Mammary epithelial cell (primary cell): ENCODE measurements at regions of chr2 and their contacts with region 1.

Region 1: GRCh38 chr2:200168641-200169555 is 137.6 kb upstream of the SPATS2L start:
- DNase-seq: no peak
- H3K4me3 ChIP-seq: no peak overlapping the region
- H3K27ac ChIP-seq: no peak overlapping the region
- H3K4me1 ChIP-seq: peaks cover 7% of the 10 kb centered on the region
- H3K27me3 ChIP-seq: no peaks in the 10 kb centered on the region
- CTCF ChIP-seq: no peak

Region 2: GRCh38 chr2:200086911-200087310 is 82.0 kb before region 1 on chr2:
- CTCF ChIA-PET with region 1: no interaction called
- dilution Hi-C with region 1: no loop called
- in situ Hi-C with region 1: no loop called
- intact Hi-C with region 1: no loop called
- DNase-seq: no peak
- H3K4me3 ChIP-seq: no peak overlapping the region
- H3K27ac ChIP-seq: no peak overlapping the region
- H3K4me1 ChIP-seq: no peaks in the 10 kb centered on the region
- H3K27me3 ChIP-seq: peaks cover 5% of the 10 kb centered on the region
- CTCF ChIP-seq: no peak

Region 3: GRCh38 chr2:200239216-200239615 is 70.3 kb after region 1 on chr2:
- CTCF ChIA-PET with region 1: no interaction called
- dilution Hi-C with region 1: loop called (anchors 5 kb)
- in situ Hi-C with region 1: no loop called
- intact Hi-C with region 1: no loop called
- DNase-seq: peak; percentile 35
- H3K4me3 ChIP-seq: no peak overlapping the region
- H3K27ac ChIP-seq: no peak overlapping the region
- H3K4me1 ChIP-seq: no peaks in the 10 kb centered on the region
- H3K27me3 ChIP-seq: no peaks in the 10 kb centered on the region
- CTCF ChIP-seq: no peak